Gastrocnemius medialis (tissue), 4 donors: ENCODE measurements at regions of chr5 and their contacts with region 1.

Region 1: GRCh38 chr5:6525910-6526309 is 77.3 kb downstream of the UBE2QL1 start:
- DNase-seq: peak in 1 of 2 donors; percentile 39
- ATAC-seq: peak; percentile 56 to 76
- H3K4me3 ChIP-seq: no peak overlapping the region
- H3K27ac ChIP-seq: no peak overlapping the region
- H3K4me1 ChIP-seq: peaks cover 9 to 26% of the 10 kb centered on the region in 2 donors
- H3K27me3 ChIP-seq: no peaks in the 10 kb centered on the region
- CTCF ChIP-seq: peak in 3 of 5 experiments; percentile 29 to 37 (median 32)
- POLR2A ChIP-seq: no peak

Region 2: GRCh38 chr5:6291961-6292360 is 233.9 kb before region 1 on chr5:
- in situ Hi-C with region 1: no loop called
- intact Hi-C with region 1: loop called (anchors 5 kb)
- DNase-seq: no peak
- ATAC-seq: no peak
- H3K4me3 ChIP-seq: no peak overlapping the region
- H3K27ac ChIP-seq: no peak overlapping the region
- H3K4me1 ChIP-seq: no peaks in the 10 kb centered on the region
- H3K27me3 ChIP-seq: no peaks in the 10 kb centered on the region
- CTCF ChIP-seq: peak in 1 of 5 experiments; percentile 27
- POLR2A ChIP-seq: no peak

Region 3: GRCh38 chr5:6461793-6462657 is 63.9 kb before region 1 on chr5:
- in situ Hi-C with region 1: no loop called
- intact Hi-C with region 1: loop called (anchors 5 kb)
- DNase-seq: no peak
- ATAC-seq: no peak
- H3K4me3 ChIP-seq: no peak overlapping the region
- H3K27ac ChIP-seq: peak overlapping the region; percentile 71 to 96 (median 93)
- H3K4me1 ChIP-seq: peaks cover 44 to 53% of the 10 kb centered on the region in 2 donors
- H3K27me3 ChIP-seq: no peaks in the 10 kb centered on the region
- CTCF ChIP-seq: no peak
- POLR2A ChIP-seq: no peak